Posterior cingulate gyrus (tissue), 11 donors: ENCODE measurements at regions of chr3 and their contacts with region 1.

Region 1: GRCh38 chr3:151168269-151169094 is 34.5 kb downstream of the GPR171 start:
- DNase-seq: peak; percentile 34 to 94 (median 73)

Region 2: GRCh38 chr3:151282921-151283320 is 114.4 kb after region 1 on chr3:
- intact Hi-C with region 1: loop called (anchors 1 kb)
- DNase-seq: no peak